ENCODE measurements at regions of chr2 and their contacts with region 1.

Region 1: DNA sequence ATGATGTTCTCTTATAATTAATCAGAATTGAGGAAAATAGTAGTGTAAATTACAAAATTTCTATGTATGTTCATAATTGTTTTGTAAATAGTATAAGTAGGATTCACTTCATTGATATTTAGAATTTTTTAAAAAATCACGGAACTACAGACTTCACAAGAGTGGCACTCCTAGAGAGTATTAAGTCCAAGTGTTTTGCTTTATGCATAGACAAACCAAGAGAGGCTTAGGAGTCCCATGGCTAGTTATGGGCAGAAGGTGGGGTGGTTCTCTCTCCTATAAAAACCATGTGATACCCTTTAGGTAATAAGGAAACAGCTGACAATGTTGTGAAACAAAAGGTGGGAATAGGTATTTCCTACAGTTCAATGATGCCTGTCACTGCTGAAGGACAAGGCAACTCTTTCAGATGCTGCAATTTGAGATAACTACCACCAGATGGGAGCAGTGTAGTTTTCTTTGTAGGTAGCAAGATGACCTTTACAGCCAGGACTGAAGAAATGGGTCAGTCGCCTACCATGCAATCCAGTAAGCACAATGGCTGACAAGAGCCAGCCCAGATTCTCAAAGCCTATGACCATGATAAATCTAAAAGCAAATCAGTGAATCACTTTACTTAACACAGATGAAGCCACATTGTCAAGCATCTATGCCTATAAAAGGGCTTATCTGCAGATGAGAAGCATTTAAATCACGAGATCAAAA is 83.9 kb downstream of the AAK1 start:
- DNase-seq: no peak
- ATAC-seq: peak; percentile 93

Region 2: DNA sequence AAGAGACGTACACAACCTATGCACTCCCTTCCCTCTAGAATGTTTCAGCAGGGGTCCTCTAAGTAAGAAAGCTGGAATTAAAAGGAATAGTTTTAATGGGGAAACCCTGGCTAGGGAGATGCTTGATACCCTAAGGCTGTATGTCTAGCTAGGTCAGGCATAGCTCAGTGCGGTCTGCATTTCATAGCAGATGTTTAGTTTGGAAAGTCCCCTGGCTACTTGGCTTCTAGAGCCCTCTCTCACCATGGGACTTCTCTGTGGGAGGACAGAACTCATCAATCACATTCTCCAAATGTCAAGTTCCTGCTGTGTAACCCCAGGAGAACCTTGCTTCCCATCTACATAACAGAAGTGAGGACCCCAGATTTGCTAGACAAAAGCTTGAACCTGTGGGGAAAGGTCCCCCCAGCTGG is 158.3 kb after region 1 on chr2:
- intact Hi-C with region 1: loop called (anchors 5 to 10 kb)
- DNase-seq: no peak
- ATAC-seq: no peak

Region 3: GRCh38 chr2:69816923-69817542 is 257.4 kb after region 1 on chr2:
- intact Hi-C with region 1: loop called in 1 of 2 experiments (anchors 10 kb)
- DNase-seq: peak; percentile 66 to 72
- ATAC-seq: peak; percentile 82

Measured in left colon (tissue), 2 donors.